CD4-positive, alpha-beta T cell (primary cell): ENCODE measurements at regions of chr22 and their contacts with region 1.

Region 1: DNA sequence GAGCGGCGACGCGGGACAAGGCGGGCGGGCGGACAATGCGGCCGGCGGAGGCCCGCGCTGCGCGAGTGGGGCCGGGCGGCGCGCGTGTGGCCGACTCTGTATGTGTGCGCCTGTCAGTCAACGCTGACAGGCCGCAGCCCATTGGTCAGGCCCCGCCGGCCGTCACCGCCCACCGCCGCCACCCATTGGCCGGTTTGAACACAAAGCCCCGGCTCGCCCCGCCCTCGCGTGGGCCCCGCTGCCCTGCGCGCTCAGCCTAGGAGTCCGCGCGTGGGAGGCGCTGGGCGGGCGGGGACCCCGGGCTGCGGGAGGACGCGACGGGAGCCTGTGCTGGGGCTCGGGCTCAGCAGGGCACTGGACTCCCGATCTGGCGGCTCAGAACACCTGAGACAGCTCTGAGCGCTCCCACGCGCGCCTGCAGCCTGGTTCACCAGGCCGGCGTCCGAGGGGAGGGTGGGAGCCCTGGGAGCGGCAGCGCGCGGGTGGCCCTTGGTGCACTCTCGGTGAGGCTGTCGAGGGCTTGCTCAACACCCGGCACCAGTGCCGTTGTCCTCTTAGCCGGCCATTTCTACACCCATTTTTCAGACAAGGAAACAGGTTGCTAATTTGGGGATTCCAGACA is at the start of gene SUN2:
- DNase-seq: peak; percentile 85 to 96 (median 94)
- ATAC-seq: peak; percentile 63
- H3K4me3 ChIP-seq: peak within 1 kb of the TSS; percentile 98
- H3K4me3 Mint-ChIP-seq: peak within 1 kb of the TSS; percentile 99
- H3K27ac ChIP-seq: peak within 1 kb of the TSS; percentile 75 to 81
- H3K27ac Mint-ChIP-seq: peak within 1 kb of the TSS; percentile 99
- H3K4me1 ChIP-seq: peaks cover 73% of the 10 kb centered on the region
- H3K4me1 Mint-ChIP-seq: peaks cover 69% of the 10 kb centered on the region
- H3K27me3 ChIP-seq: no peaks in the 10 kb centered on the region
- H3K27me3 Mint-ChIP-seq: no peaks in the 10 kb centered on the region
- CTCF ChIP-seq: no peak
- total RNA-seq, gene SUN2: 440 to 453 TPM

Region 2: DNA sequence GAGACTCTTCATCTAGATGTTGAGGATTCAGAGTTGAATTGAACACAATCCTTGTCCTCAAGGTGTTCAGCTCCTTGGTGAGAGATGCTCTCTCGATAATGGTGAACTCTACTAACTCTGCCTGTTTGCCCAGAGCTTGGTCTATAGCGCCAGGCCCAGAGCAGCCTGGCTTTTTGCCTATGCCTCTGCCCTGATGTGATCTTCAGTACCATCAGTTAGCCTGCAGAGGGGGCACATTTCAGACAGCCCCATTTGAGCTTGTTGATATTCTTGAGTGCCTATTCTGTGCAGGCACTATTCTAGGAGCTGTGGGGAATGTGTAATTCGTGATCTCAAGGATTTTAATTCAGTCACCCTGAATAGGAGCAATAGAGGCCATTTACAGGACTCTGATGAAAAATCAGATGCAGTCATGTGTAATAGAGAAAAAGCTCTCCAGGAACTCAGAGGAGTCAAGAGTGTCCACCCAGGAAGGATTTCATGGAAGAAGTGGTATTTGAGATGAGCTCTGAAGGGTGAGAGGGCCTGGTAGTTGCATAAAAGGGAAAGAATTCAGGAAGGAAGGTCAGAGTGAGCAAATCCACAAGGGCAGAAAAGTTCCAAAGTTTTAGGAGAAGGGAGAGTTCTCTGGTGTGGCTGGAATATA is 31.0 kb before region 1 on chr22:
- CTCF ChIA-PET with region 1: interaction called, 20 read pairs
- POLR2A ChIA-PET with region 1: interaction called, 752 read pairs
- intact Hi-C with region 1: no loop called
- DNase-seq: peak in 7 of 14 experiments; percentile 22 to 75 (median 53)
- ATAC-seq: peak; percentile 92
- H3K4me3 ChIP-seq: no peak overlapping the region
- H3K4me3 Mint-ChIP-seq: no peak overlapping the region
- H3K27ac ChIP-seq: no peak overlapping the region
- H3K27ac Mint-ChIP-seq: peak overlapping the region; percentile 78
- H3K4me1 ChIP-seq: peaks cover 1% of the 10 kb centered on the region
- H3K4me1 Mint-ChIP-seq: peaks cover 15% of the 10 kb centered on the region
- H3K27me3 ChIP-seq: no peaks in the 10 kb centered on the region
- H3K27me3 Mint-ChIP-seq: no peaks in the 10 kb centered on the region
- CTCF ChIP-seq: peak; percentile 62

Region 3: GRCh38 chr22:38740754-38741153 is 15.3 kb before region 1 on chr22:
- CTCF ChIA-PET with region 1: interaction called, 4 read pairs
- POLR2A ChIA-PET with region 1: interaction called, 752 read pairs
- intact Hi-C with region 1: no loop called
- DNase-seq: no peak
- ATAC-seq: no peak
- H3K4me3 ChIP-seq: no peak overlapping the region
- H3K4me3 Mint-ChIP-seq: no peak overlapping the region
- H3K27ac ChIP-seq: peak overlapping the region; percentile 41 to 44
- H3K27ac Mint-ChIP-seq: peak overlapping the region; percentile 69
- H3K4me1 ChIP-seq: peaks cover 82% of the 10 kb centered on the region
- H3K4me1 Mint-ChIP-seq: peaks cover 49% of the 10 kb centered on the region
- H3K27me3 ChIP-seq: no peaks in the 10 kb centered on the region
- H3K27me3 Mint-ChIP-seq: no peaks in the 10 kb centered on the region
- CTCF ChIP-seq: no peak

Region 4: GRCh38 chr22:38766076-38766777 is 10.2 kb after region 1 on chr22:
- CTCF ChIA-PET with region 1: interaction called, 12 read pairs
- POLR2A ChIA-PET with region 1: interaction called, 26 read pairs
- intact Hi-C with region 1: no loop called
- DNase-seq: peak in 13 of 14 experiments; percentile 22 to 75 (median 40)
- ATAC-seq: peak; percentile 65
- H3K4me3 ChIP-seq: no peak overlapping the region
- H3K4me3 Mint-ChIP-seq: no peak overlapping the region
- H3K27ac ChIP-seq: no peak overlapping the region
- H3K27ac Mint-ChIP-seq: no peak overlapping the region
- H3K4me1 ChIP-seq: peaks cover 22% of the 10 kb centered on the region
- H3K4me1 Mint-ChIP-seq: peaks cover 9% of the 10 kb centered on the region
- H3K27me3 ChIP-seq: no peaks in the 10 kb centered on the region
- H3K27me3 Mint-ChIP-seq: no peaks in the 10 kb centered on the region
- CTCF ChIP-seq: peak; percentile 69

Region 5: DNA sequence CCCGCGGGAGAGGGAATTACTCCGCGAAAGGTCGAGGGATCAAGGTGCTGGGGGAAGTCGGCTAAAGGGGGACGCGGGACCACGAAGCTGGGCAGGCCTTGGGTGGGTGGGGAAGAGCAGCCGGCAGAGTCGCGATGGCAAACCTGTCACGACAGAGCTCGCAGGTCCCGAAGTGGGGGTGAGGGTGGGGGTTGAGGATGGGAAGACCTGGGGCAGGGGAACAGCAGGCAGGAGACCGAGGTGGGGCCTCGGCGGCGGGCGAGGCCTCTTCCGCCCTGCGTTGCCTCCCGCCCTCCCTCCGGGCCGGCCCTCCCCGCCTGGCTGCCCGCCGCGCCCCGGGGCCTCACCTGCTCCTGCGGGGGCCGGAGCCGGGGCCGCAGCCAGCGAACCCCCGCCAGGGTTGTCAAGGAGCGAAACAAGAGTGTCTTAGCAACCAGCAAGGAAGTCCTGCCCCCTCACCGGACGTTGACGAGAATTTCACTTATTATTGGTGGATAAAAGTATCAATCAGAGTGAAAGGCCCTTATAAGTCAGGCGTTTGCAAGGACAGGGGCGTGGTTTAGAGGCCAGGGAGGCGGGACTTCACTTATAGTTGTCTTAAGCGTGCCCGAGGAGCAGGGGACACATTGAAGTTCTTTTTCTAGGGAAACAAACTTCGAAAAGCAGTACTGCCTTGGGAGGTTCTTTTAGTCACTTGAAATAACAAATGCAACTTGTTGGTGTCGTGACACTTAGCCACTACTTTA is 37.9 kb after region 1 on chr22 and contains the start of gene DNAL4:
- CTCF ChIA-PET with region 1: no interaction called
- POLR2A ChIA-PET with region 1: interaction called, 4 read pairs
- intact Hi-C with region 1: loop called in 1 of 2 experiments (anchors 1 kb)
- DNase-seq: peak; percentile 82 to 98 (median 89)
- ATAC-seq: peak; percentile 98
- H3K4me3 ChIP-seq: peak within 1 kb of the TSS; percentile 69
- H3K4me3 Mint-ChIP-seq: peak within 1 kb of the TSS; percentile 96
- H3K27ac ChIP-seq: peak within 1 kb of the TSS in 1 of 2 donors; percentile 43
- H3K27ac Mint-ChIP-seq: peak within 1 kb of the TSS; percentile 90
- H3K4me1 ChIP-seq: peaks cover 22% of the 10 kb centered on the region
- H3K4me1 Mint-ChIP-seq: peaks cover 46% of the 10 kb centered on the region
- H3K27me3 ChIP-seq: peaks cover 0 to 2% of the 10 kb centered on the region in 2 experiments
- H3K27me3 Mint-ChIP-seq: peaks cover 4% of the 10 kb centered on the region
- CTCF ChIP-seq: no peak
- total RNA-seq, gene DNAL4: 1.9 to 2.7 TPM

Region 6: DNA sequence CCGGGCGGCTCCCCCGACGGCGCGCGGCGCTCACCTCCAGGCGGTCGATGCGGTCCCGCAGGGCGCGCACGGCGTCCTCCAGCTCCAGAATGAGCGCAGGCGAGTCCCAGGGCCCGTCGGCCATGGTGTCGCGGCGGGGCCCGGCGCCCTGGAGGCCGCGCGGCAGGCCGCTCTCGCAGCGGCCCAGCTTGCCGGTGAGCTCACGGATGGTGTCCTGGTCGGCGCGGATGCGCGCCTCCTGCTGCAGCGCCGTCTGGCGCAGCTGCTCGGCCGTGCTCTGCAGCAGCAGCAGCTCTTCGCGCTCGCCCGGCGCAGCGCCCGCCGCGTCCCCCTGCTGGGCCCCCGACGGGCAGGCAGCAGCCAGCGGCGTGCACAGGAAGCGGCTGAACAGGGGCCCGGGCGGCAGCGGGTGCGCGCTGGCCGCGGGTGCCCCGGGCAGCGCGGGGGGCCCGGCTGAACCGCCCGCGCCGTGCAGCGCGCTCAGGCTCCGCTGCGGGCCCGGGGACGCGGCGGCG is 87.2 kb after region 1 on chr22:
- CTCF ChIA-PET with region 1: interaction called, 3 read pairs
- POLR2A ChIA-PET with region 1: interaction called, 50 read pairs
- intact Hi-C with region 1: loop called (anchors 5 kb)
- DNase-seq: peak in 13 of 14 experiments; percentile 23 to 87 (median 59)
- ATAC-seq: peak; percentile 88
- H3K4me3 ChIP-seq: no peak overlapping the region
- H3K4me3 Mint-ChIP-seq: no peak overlapping the region
- H3K27ac ChIP-seq: no peak overlapping the region
- H3K27ac Mint-ChIP-seq: no peak overlapping the region
- H3K4me1 ChIP-seq: peaks cover 24% of the 10 kb centered on the region
- H3K4me1 Mint-ChIP-seq: peaks cover 30% of the 10 kb centered on the region
- H3K27me3 ChIP-seq: peaks cover 5 to 12% of the 10 kb centered on the region in 2 experiments
- H3K27me3 Mint-ChIP-seq: peaks cover 21% of the 10 kb centered on the region
- CTCF ChIP-seq: no peak

Region 7: GRCh38 chr22:38890377-38890776 is 134.4 kb after region 1 on chr22:
- CTCF ChIA-PET with region 1: no interaction called
- POLR2A ChIA-PET with region 1: no interaction called
- intact Hi-C with region 1: no loop called
- DNase-seq: no peak
- ATAC-seq: no peak
- H3K4me3 ChIP-seq: no peak overlapping the region
- H3K4me3 Mint-ChIP-seq: no peak overlapping the region
- H3K27ac ChIP-seq: no peak overlapping the region
- H3K27ac Mint-ChIP-seq: no peak overlapping the region
- H3K4me1 ChIP-seq: no peaks in the 10 kb centered on the region
- H3K4me1 Mint-ChIP-seq: no peaks in the 10 kb centered on the region
- H3K27me3 ChIP-seq: peaks cover under 1 to 4% of the 10 kb centered on the region in 2 experiments
- H3K27me3 Mint-ChIP-seq: peaks cover 23% of the 10 kb centered on the region
- CTCF ChIP-seq: no peak